Body of pancreas (tissue), 4 donors: ENCODE measurements at regions of chr1 and their contacts with region 1.

Region 1: DNA sequence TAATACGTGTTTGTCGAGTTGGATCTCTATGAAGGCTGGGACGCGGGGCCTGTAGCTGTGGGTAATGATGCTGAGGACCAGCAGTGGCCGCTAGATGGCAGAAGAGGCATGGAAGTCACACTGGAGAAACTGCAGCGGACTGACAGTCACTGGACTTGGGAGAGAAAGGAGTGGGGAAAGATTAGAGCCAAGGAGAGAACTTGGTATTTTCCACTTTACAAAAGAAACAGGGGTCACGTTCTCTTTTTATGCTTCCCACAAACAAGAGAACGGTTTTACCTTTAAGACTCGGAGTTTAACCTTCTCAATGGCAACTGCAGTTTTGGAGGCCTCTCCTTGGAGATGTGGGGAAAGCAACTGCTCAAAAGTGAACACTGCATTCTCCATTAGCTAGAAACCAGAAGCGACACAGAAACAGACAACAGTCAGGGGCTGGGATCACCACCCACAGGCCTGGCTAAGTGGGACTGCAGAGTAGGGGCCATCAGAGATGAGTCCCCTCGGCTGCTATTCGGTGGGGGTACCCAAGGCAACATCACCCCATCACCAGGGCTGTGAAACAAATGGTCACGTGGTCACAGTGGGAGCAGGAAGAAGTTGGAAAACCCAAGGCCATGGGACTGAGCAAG is 51.1 kb upstream of the EDEM3 start:
- DNase-seq: peak; percentile 93 to 96 (median 93)
- ATAC-seq: peak; percentile 98
- H3K4me3 ChIP-seq: no peak overlapping the region
- H3K27ac ChIP-seq: peak overlapping the region in 3 of 4 donors; percentile 2 to 26 (median 11)
- H3K4me1 ChIP-seq: peaks cover 9% of the 10 kb centered on the region
- H3K27me3 ChIP-seq: no peaks in the 10 kb centered on the region
- CTCF ChIP-seq: peak; percentile 60 to 98 (median 96)
- POLR2A ChIP-seq: peak in 1 of 3 donors; percentile 10

Region 2: GRCh38 chr1:184945029-184945428 is 139.2 kb after region 1 on chr1:
- intact Hi-C with region 1: no loop called
- DNase-seq: no peak
- ATAC-seq: no peak
- H3K4me3 ChIP-seq: no peak overlapping the region
- H3K27ac ChIP-seq: peak overlapping the region in 1 of 4 donors; percentile 12
- H3K4me1 ChIP-seq: peaks cover 26% of the 10 kb centered on the region
- H3K27me3 ChIP-seq: no peaks in the 10 kb centered on the region
- CTCF ChIP-seq: no peak
- POLR2A ChIP-seq: no peak

Region 3: DNA sequence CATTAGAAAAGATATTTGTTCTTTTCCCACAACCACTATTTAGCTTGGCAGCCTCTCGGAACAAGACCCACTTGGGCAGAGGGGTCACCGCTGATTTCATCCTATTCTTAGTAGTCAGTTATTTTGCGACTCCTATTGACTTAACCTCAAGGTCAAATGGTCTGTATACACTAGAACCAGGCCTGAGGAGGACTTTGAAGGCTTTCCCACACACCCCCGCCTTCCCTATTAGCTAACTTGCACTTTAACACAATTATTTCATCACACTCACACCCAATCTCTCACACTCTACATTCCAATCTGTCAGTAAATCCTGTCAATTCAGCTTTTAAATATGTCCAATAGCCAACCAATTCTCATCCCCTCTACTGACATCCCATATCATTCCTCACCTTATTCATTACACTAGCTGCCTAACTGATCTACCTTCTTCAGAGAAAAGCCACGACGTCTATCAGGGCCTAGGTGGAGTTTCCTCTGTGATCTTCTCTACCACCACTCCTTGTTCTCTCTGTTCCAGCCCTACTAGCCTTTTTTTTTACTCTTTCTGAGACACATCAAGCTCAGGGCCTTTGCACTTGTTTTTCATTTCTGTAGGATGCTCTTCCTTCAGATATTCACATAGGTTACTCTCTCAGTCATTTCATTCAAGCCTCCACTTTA is 169.6 kb after region 1 on chr1:
- intact Hi-C with region 1: loop called (anchors 5 kb)
- DNase-seq: peak in 3 of 4 donors; percentile 33 to 47 (median 35)
- ATAC-seq: peak; percentile 36
- H3K4me3 ChIP-seq: no peak overlapping the region
- H3K27ac ChIP-seq: peak overlapping the region in 3 of 4 donors; percentile 90 to 94 (median 93)
- H3K4me1 ChIP-seq: peaks cover 31% of the 10 kb centered on the region
- H3K27me3 ChIP-seq: no peaks in the 10 kb centered on the region
- CTCF ChIP-seq: no peak
- POLR2A ChIP-seq: no peak